Ascending aorta (tissue), 2 donors: ENCODE measurements at regions of chr5 and their contacts with region 1.

Region 1: DNA sequence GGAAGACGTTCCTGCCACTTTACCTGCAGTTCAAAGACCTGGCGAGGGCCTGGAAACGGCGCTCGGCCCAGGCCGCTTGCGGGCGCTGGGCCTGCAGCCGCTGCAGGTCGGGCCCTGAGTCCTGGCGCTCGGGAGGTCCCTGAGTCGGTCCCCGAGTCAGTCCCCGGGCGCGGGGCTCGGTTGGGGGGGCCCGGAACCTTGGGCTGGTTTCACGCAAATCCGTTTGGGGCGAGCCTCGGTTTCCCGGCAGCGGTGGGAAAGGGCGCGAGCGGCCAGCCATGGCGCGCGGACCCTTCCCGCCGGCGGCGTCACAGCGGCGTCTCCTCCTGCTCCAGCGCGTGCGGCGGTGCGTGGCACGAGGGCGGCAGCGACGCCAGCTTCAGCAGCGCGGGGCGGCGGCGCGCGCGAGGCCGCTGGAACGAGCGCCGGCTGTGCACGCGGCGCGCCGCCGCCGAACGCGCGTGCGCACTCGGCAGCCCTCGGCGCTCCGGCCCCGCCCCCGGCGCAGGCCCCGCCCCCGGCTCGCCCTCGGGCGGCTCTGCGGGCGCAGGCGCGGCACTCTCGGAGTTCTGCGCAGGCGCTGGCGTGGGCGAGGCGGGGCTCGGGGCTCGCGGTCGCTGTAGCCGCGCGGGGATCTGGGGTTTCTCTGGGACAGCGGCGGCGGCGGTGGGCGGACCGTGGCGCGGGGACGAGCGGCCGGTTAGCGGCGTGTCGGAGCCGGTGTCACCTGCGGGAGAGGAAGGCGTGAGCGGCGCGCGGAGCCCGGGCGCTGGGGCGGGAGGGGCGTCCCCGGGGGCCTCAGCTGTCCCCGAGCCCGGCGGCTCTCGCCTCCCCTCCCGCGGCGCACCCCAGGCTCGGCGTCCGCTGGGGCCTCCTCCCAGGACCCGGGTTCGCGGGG is 29.9 kb downstream of the EXOC3 start:
- DNase-seq: peak in 1 of 2 donors; percentile 91
- H3K4me3 ChIP-seq: peak overlapping the region; percentile 91 to 100
- H3K27ac ChIP-seq: peak overlapping the region; percentile 52 to 66
- H3K4me1 ChIP-seq: peaks cover 10 to 15% of the 10 kb centered on the region in 2 donors
- H3K27me3 ChIP-seq: no peaks in the 10 kb centered on the region
- CTCF ChIP-seq: no peak

Region 2: GRCh38 chr5:270340-270739 is 202.6 kb before region 1 on chr5:
- intact Hi-C with region 1: loop called (anchors 1 kb)
- DNase-seq: peak in 1 of 2 donors; percentile 62
- H3K4me3 ChIP-seq: peak overlapping the region in 1 of 2 donors; percentile 99
- H3K27ac ChIP-seq: no peak overlapping the region
- H3K4me1 ChIP-seq: peaks cover 0 to 7% of the 10 kb centered on the region in 2 donors
- H3K27me3 ChIP-seq: no peaks in the 10 kb centered on the region
- CTCF ChIP-seq: no peak

Region 3: DNA sequence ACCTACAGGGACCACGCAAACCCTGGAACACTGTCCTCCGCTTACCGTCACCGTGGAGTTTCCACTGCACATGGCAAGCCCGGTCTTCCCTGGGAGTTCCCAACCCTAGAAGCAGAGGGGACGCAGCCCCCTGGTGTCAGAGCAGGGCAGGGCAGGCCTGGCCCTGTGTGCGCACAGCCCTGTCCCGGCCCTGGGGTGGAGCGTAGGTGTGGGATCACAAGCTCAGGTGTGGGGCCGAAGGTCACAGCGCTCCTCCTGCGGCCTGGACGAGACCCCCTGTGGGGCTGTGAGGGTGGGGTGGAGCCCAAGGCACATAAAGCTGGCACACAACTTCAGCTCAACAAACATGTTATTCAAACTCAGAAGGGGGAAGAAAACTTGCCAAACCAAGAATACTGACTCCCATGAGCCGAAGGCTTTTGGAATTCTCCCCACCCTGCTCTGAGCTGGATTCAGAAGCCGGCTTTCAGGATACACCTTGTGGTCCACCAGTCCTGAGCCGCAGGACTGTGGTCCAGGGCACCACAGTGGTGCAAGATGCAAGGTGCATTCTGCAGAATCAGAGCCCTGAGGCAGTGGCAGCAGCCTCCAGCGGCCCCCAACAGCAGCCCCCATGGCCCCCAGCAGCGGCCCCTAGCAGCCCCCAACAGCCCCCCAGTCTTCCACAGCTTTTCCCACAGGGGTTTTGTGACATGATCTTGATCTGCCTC is 41.7 kb before region 1 on chr5:
- intact Hi-C with region 1: no loop called
- DNase-seq: no peak
- H3K4me3 ChIP-seq: no peak overlapping the region
- H3K27ac ChIP-seq: no peak overlapping the region
- H3K4me1 ChIP-seq: no peaks in the 10 kb centered on the region
- H3K27me3 ChIP-seq: no peaks in the 10 kb centered on the region
- CTCF ChIP-seq: peak in 2 of 3 experiments; percentile 54 to 55

Region 4: GRCh38 chr5:543825-544674 is 71.1 kb after region 1 on chr5:
- intact Hi-C with region 1: no loop called
- DNase-seq: no peak
- H3K4me3 ChIP-seq: no peak overlapping the region
- H3K27ac ChIP-seq: no peak overlapping the region
- H3K4me1 ChIP-seq: no peaks in the 10 kb centered on the region
- H3K27me3 ChIP-seq: no peaks in the 10 kb centered on the region
- CTCF ChIP-seq: no peak

Region 5: GRCh38 chr5:611721-612486 is 139.0 kb after region 1 on chr5 and contains the start of gene CEP72:
- intact Hi-C with region 1: loop called (anchors 1 kb)
- DNase-seq: peak; percentile 33 to 91
- H3K4me3 ChIP-seq: peak within 1 kb of the TSS; percentile 87 to 89
- H3K27ac ChIP-seq: no peak within 1 kb of the TSS
- H3K4me1 ChIP-seq: peaks cover 0 to 9% of the 10 kb centered on the region in 2 donors
- H3K27me3 ChIP-seq: no peaks in the 10 kb centered on the region
- CTCF ChIP-seq: no peak
- total RNA-seq, gene CEP72: 0.32 TPM

Region 6: GRCh38 chr5:892394-893136 is 419.7 kb after region 1 on chr5 and contains the starts of genes BRD9 and TRIP13:
- intact Hi-C with region 1: loop called (anchors 2 kb)
- DNase-seq: peak in 1 of 2 donors; percentile 84
- H3K4me3 ChIP-seq: peak within 1 kb of the TSS; percentile 88 to 100
- H3K27ac ChIP-seq: peak within 1 kb of the TSS; percentile 82 to 90
- H3K4me1 ChIP-seq: peaks cover 13% of the 10 kb centered on the region in 2 donors
- H3K27me3 ChIP-seq: no peaks in the 10 kb centered on the region
- CTCF ChIP-seq: peak in 1 of 3 experiments; percentile 4
- total RNA-seq, gene BRD9: 13.6 TPM
- total RNA-seq, gene TRIP13: not detected

Region 7: GRCh38 chr5:1799602-1800471 is 1326.9 kb after region 1 on chr5 and contains the start of gene MRPL36:
- intact Hi-C with region 1: loop called (anchors 10 kb)
- DNase-seq: peak; percentile 64 to 93
- H3K4me3 ChIP-seq: peak within 1 kb of the TSS; percentile 80 to 97
- H3K27ac ChIP-seq: peak within 1 kb of the TSS; percentile 63 to 80
- H3K4me1 ChIP-seq: peaks cover 4 to 14% of the 10 kb centered on the region in 2 donors
- H3K27me3 ChIP-seq: no peaks in the 10 kb centered on the region
- CTCF ChIP-seq: no peak
- total RNA-seq, gene MRPL36: 21.4 TPM